ENCODE measurements at regions of chr7 and their contacts with region 1.

Region 1: GRCh38 chr7:81499262-81500116 is 270.4 kb downstream of the HGF start:
- DNase-seq: peak; percentile 37 to 63 (median 55)
- H3K4me3 ChIP-seq: no peak overlapping the region
- H3K4me3 Mint-ChIP-seq: no peak overlapping the region
- H3K27ac ChIP-seq: no peak overlapping the region
- H3K27ac Mint-ChIP-seq: peak overlapping the region in 1 of 7 donors; percentile 5
- H3K4me1 ChIP-seq: no peaks in the 10 kb centered on the region
- H3K4me1 Mint-ChIP-seq: peaks cover 7% of the 10 kb centered on the region
- H3K27me3 ChIP-seq: no peaks in the 10 kb centered on the region
- H3K27me3 Mint-ChIP-seq: peaks cover 0 to 2% (median 0%) of the 10 kb centered on the region in 3 donors
- CTCF ChIP-seq: peak; percentile 69

Region 2: DNA sequence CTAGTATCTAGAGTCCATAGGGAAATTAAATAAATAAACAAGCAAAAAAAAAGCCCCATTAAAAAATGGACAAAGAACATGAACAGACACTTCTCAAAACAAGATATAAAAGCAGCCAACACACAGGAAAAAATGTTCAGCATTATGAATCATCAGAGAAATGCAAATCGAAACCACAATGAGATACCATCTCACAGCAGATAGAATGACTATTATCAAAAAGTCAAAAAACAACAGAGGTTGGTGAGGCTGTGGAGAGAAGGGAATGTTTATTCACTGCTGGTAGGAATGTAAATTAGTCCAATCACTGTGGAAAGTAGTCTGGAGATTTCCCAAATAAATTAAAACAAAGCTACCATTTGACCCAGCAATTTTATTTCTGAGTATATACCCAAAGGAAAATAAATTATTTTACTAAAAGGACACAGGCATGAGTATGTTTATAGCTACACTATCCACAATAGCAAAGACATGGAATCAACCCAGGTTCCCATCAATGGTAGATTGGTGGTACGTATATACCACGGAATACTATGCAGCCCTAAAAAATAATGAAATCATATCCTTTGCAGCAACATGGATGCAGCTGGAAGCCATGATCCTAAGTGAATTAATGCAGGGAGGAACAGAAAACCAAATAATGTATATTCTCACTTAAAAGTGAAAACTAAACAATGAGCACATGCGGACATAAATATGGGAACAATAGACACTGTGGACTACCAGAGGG is 214.2 kb before region 1 on chr7:
- intact Hi-C with region 1: no loop called
- DNase-seq: no peak
- H3K4me3 ChIP-seq: no peak overlapping the region
- H3K4me3 Mint-ChIP-seq: no peak overlapping the region
- H3K27ac ChIP-seq: no peak overlapping the region
- H3K27ac Mint-ChIP-seq: no peak overlapping the region
- H3K4me1 ChIP-seq: no peaks in the 10 kb centered on the region
- H3K4me1 Mint-ChIP-seq: no peaks in the 10 kb centered on the region
- H3K27me3 ChIP-seq: no peaks in the 10 kb centered on the region
- H3K27me3 Mint-ChIP-seq: peaks cover 0 to 1% (median 0%) of the 10 kb centered on the region in 3 donors
- CTCF ChIP-seq: no peak

Region 3: GRCh38 chr7:81956520-81956919 is 457.0 kb after region 1 on chr7:
- intact Hi-C with region 1: loop called (anchors 5 to 10 kb)
- DNase-seq: peak; percentile 32 to 49 (median 48)
- H3K4me3 ChIP-seq: no peak overlapping the region
- H3K4me3 Mint-ChIP-seq: no peak overlapping the region
- H3K27ac ChIP-seq: no peak overlapping the region
- H3K27ac Mint-ChIP-seq: no peak overlapping the region
- H3K4me1 ChIP-seq: no peaks in the 10 kb centered on the region
- H3K4me1 Mint-ChIP-seq: peaks cover 11% of the 10 kb centered on the region
- H3K27me3 ChIP-seq: no peaks in the 10 kb centered on the region
- H3K27me3 Mint-ChIP-seq: no peaks in the 10 kb centered on the region
- CTCF ChIP-seq: peak; percentile 70

Region 4: GRCh38 chr7:82183634-82184033 is 684.1 kb after region 1 on chr7:
- intact Hi-C with region 1: no loop called
- DNase-seq: peak in 1 of 3 donors; percentile 12
- H3K4me3 ChIP-seq: no peak overlapping the region
- H3K4me3 Mint-ChIP-seq: no peak overlapping the region
- H3K27ac ChIP-seq: no peak overlapping the region
- H3K27ac Mint-ChIP-seq: no peak overlapping the region
- H3K4me1 ChIP-seq: no peaks in the 10 kb centered on the region
- H3K4me1 Mint-ChIP-seq: peaks cover 3% of the 10 kb centered on the region
- H3K27me3 ChIP-seq: no peaks in the 10 kb centered on the region
- H3K27me3 Mint-ChIP-seq: peaks cover 2 to 3% (median 2%) of the 10 kb centered on the region in 3 donors
- CTCF ChIP-seq: no peak

Region 5: DNA sequence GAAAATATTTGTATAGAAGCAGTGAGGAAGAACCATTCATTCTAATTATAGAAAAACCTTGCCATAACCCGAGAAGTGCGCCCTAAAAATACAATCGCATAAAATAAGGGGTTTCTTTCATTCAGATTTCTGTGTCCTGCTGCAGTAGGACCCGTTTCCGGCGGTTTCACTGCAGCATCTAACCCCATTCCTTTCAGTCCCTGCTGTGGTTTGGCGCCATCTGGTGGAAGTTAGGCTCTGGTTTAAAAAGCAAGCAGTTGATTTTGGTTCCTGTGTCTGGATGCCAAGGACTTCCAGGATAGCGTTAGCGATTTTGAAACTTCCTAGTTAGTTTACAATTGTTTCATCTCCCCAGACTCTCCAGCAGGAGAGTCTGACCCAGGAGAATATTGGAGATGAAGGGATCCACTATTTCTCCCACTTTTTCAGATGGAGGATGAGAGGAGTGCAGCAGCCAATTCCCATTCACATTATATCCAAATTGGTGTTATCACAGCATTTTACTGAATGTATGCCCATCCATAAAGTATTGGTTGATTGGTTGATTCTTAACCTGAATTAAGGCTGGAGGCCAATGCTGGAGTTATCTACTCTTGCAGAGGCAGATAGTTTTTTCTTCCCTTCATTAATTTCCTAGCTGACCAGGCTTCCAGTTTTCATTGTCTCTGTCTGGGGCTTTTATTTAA is 1072.8 kb after region 1 on chr7:
- intact Hi-C with region 1: loop called (anchors 5 to 10 kb)
- DNase-seq: peak; percentile 35 to 63 (median 52)
- H3K4me3 ChIP-seq: no peak overlapping the region
- H3K4me3 Mint-ChIP-seq: no peak overlapping the region
- H3K27ac ChIP-seq: no peak overlapping the region
- H3K27ac Mint-ChIP-seq: no peak overlapping the region
- H3K4me1 ChIP-seq: no peaks in the 10 kb centered on the region
- H3K4me1 Mint-ChIP-seq: peaks cover 3% of the 10 kb centered on the region
- H3K27me3 ChIP-seq: no peaks in the 10 kb centered on the region
- H3K27me3 Mint-ChIP-seq: peaks cover 0 to 4% (median 1%) of the 10 kb centered on the region in 3 donors
- CTCF ChIP-seq: peak; percentile 91

Measured in CD14-positive monocyte (primary cell).